HepG2 (cell line): ENCODE measurements at regions of chr9 and their contacts with region 1.

Region 1: GRCh38 chr9:106829666-106830408 is 33.1 kb upstream of the ZNF462 start:
- DNase-seq: no peak
- ATAC-seq: no peak
- H3K4me3 ChIP-seq: no peak overlapping the region
- H3K27ac ChIP-seq: no peak overlapping the region
- H3K4me1 ChIP-seq: no peaks in the 10 kb centered on the region
- H3K27me3 ChIP-seq: no peaks in the 10 kb centered on the region
- CTCF ChIP-seq: no peak
- EP300 ChIP-seq: no peak
- POLR2A ChIP-seq: no peak
- RAD21 ChIP-seq: no peak

Region 2: GRCh38 chr9:106846857-106847256 is 17.0 kb after region 1 on chr9:
- CTCF ChIA-PET with region 1: no interaction called
- POLR2A ChIA-PET with region 1: no interaction called
- in situ Hi-C with region 1: no loop called
- intact Hi-C with region 1: no loop called
- DNase-seq: no peak
- ATAC-seq: no peak
- H3K4me3 ChIP-seq: no peak overlapping the region
- H3K27ac ChIP-seq: no peak overlapping the region
- H3K4me1 ChIP-seq: no peaks in the 10 kb centered on the region
- H3K27me3 ChIP-seq: no peaks in the 10 kb centered on the region
- CTCF ChIP-seq: no peak
- EP300 ChIP-seq: no peak
- POLR2A ChIP-seq: no peak
- RAD21 ChIP-seq: no peak

Region 3: GRCh38 chr9:106862825-106863720 is 33.2 kb after region 1 on chr9 and contains the start of gene ZNF462:
- CTCF ChIA-PET with region 1: no interaction called
- POLR2A ChIA-PET with region 1: no interaction called
- in situ Hi-C with region 1: no loop called
- intact Hi-C with region 1: no loop called
- DNase-seq: no peak
- ATAC-seq: no peak
- H3K4me3 ChIP-seq: no peak within 1 kb of the TSS
- H3K27ac ChIP-seq: no peak within 1 kb of the TSS
- H3K4me1 ChIP-seq: no peaks in the 10 kb centered on the region
- H3K27me3 ChIP-seq: peaks cover 0 to 37% of the 10 kb centered on the region in 2 experiments; a peak in 3 of 5 replicates
- CTCF ChIP-seq: no peak
- EP300 ChIP-seq: no peak
- POLR2A ChIP-seq: no peak
- RAD21 ChIP-seq: no peak
- total RNA-seq, gene ZNF462: not detected in 2 replicates

Region 4: DNA sequence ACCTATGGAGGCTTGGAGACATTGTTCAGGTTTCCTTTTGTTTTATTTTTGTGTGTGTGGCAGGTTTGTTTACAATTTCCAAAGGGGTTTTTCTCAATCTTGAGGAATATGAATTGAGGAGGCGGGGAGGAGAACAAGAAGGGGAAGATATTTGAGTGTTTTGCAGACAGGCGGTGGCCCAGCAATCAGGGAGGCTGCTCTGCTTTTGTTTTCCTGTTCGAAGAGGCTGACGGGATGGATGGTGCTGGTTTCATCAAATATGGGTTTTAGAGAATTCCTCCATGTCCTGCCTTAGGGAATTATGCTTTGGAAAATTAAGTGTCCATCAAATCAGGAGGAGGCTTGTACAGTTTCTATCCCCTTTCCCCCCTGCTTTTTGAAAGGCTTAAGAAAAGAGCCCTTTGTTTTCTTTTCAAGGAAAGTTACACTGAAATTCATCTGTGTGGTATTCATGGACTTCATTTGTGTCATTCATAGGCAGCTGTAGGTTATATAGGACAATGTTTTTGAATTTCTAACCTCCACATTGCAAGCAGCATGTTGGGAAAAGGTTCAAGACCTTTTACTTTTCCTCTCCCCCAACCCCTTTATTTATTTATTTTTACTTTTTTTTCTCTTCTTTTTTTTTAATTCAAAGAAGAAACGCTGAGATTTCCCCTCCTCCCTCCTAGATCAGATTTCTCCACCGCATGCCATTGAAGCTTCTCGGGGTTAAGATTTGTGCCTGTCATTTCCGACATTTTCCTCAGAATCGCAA is 140.6 kb after region 1 on chr9:
- CTCF ChIA-PET with region 1: no interaction called
- POLR2A ChIA-PET with region 1: no interaction called
- in situ Hi-C with region 1: no loop called
- intact Hi-C with region 1: no loop called
- DNase-seq: no peak
- ATAC-seq: no peak
- H3K4me3 ChIP-seq: no peak overlapping the region
- H3K27ac ChIP-seq: no peak overlapping the region
- H3K4me1 ChIP-seq: no peaks in the 10 kb centered on the region
- H3K27me3 ChIP-seq: peaks cover 0 to 8% of the 10 kb centered on the region in 2 experiments; a peak in 1 of 5 replicates
- CTCF ChIP-seq: no peak
- EP300 ChIP-seq: no peak
- POLR2A ChIP-seq: no peak
- RAD21 ChIP-seq: no peak

Region 5: GRCh38 chr9:107389617-107390071 is 559.8 kb after region 1 on chr9:
- CTCF ChIA-PET with region 1: no interaction called
- POLR2A ChIA-PET with region 1: no interaction called
- in situ Hi-C with region 1: no loop called
- intact Hi-C with region 1: loop called (anchors 5 kb)
- DNase-seq: peak; percentile 65
- ATAC-seq: peak; percentile 98
- H3K4me3 ChIP-seq: no peak overlapping the region
- H3K27ac ChIP-seq: no peak overlapping the region
- H3K4me1 ChIP-seq: peaks cover 21% of the 10 kb centered on the region
- H3K27me3 ChIP-seq: no peaks in the 10 kb centered on the region; a peak in 1 of 5 replicates
- CTCF ChIP-seq: no peak
- EP300 ChIP-seq: peak in 1 of 2 experiments; percentile 62; a peak in 2 of 4 replicates
- POLR2A ChIP-seq: no peak
- RAD21 ChIP-seq: no peak